Heart left ventricle (tissue), 16 donors: ENCODE measurements at regions of chr1 and their contacts with region 1.

Region 1: GRCh38 chr1:246012341-246012740 is 494.7 kb downstream of the SMYD3 start:
- DNase-seq: no peak
- ATAC-seq: no peak
- H3K4me3 ChIP-seq: no peak overlapping the region
- H3K27ac ChIP-seq: no peak overlapping the region
- H3K4me1 ChIP-seq: no peaks in the 10 kb centered on the region
- H3K27me3 ChIP-seq: no peaks in the 10 kb centered on the region
- CTCF ChIP-seq: peak; percentile 46 to 75 (median 60)
- POLR2A ChIP-seq: no peak

Region 2: GRCh38 chr1:245458719-245459181 is 553.6 kb before region 1 on chr1:
- intact Hi-C with region 1: no loop called
- DNase-seq: no peak
- ATAC-seq: no peak
- H3K4me3 ChIP-seq: no peak overlapping the region
- H3K27ac ChIP-seq: no peak overlapping the region
- H3K4me1 ChIP-seq: peaks cover 0 to 14% (median 0%) of the 10 kb centered on the region in 12 donors
- H3K27me3 ChIP-seq: peaks cover 0 to 5% (median 0%) of the 10 kb centered on the region in 9 donors
- CTCF ChIP-seq: no peak
- POLR2A ChIP-seq: no peak

Region 3: GRCh38 chr1:246117066-246117791 is 104.9 kb after region 1 on chr1:
- intact Hi-C with region 1: loop called in 4 of 10 experiments (anchors 10 kb)
- DNase-seq: peak in 1 of 5 donors; percentile 12
- ATAC-seq: peak in 2 of 4 donors; percentile 56 to 74
- H3K4me3 ChIP-seq: no peak overlapping the region
- H3K27ac ChIP-seq: no peak overlapping the region
- H3K4me1 ChIP-seq: peaks cover 0 to 8% (median 0%) of the 10 kb centered on the region in 12 donors
- H3K27me3 ChIP-seq: no peaks in the 10 kb centered on the region
- CTCF ChIP-seq: peak in 11 of 12 donors; percentile 27 to 65 (median 45)
- POLR2A ChIP-seq: no peak

Region 4: GRCh38 chr1:246270236-246270635 is 257.9 kb after region 1 on chr1:
- intact Hi-C with region 1: loop called in 3 of 10 experiments (anchors 5 to 10 kb)
- DNase-seq: no peak
- ATAC-seq: no peak
- H3K4me3 ChIP-seq: no peak overlapping the region
- H3K27ac ChIP-seq: no peak overlapping the region
- H3K4me1 ChIP-seq: no peaks in the 10 kb centered on the region
- H3K27me3 ChIP-seq: no peaks in the 10 kb centered on the region
- CTCF ChIP-seq: no peak
- POLR2A ChIP-seq: no peak

Region 5: GRCh38 chr1:246450611-246451251 is 438.4 kb after region 1 on chr1:
- intact Hi-C with region 1: loop called (anchors 1 to 5 kb)
- DNase-seq: no peak
- ATAC-seq: no peak
- H3K4me3 ChIP-seq: no peak overlapping the region
- H3K27ac ChIP-seq: no peak overlapping the region
- H3K4me1 ChIP-seq: peaks cover 0 to 14% (median 2%) of the 10 kb centered on the region in 12 donors
- H3K27me3 ChIP-seq: no peaks in the 10 kb centered on the region
- CTCF ChIP-seq: peak; percentile 53 to 75 (median 65)
- POLR2A ChIP-seq: no peak

Region 6: GRCh38 chr1:246497331-246497915 is 485.1 kb after region 1 on chr1:
- intact Hi-C with region 1: loop called in 8 of 10 experiments (anchors 2 to 10 kb)
- DNase-seq: no peak
- ATAC-seq: peak in 1 of 4 donors; percentile 31
- H3K4me3 ChIP-seq: no peak overlapping the region
- H3K27ac ChIP-seq: no peak overlapping the region
- H3K4me1 ChIP-seq: peaks cover 0 to 3% (median under 1%) of the 10 kb centered on the region in 12 donors
- H3K27me3 ChIP-seq: no peaks in the 10 kb centered on the region
- CTCF ChIP-seq: peak; percentile 61 to 83 (median 72)
- POLR2A ChIP-seq: no peak